ENCODE measurements at regions of chr5 and their contacts with region 1.

Region 1: DNA sequence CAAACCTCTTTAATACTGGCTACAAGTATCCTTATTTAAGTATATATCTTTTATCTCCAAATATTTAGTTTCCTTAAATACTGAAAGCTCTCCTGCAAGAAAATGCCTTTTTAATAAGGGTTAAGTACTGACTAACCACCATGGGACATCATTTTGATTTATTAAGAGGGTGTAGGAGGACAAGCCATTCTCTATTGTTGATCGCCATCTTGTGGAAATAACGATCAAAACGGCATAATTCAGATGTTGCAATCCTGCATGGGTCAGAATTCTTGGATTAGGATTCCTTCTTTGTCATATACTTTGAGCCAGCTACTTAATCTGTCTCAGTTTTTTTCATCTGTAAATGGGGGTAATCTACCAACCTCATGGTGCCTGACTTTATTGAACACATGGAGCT is 28.7 kb upstream of the C5orf46 start:
- DNase-seq: peak in 1 of 2 experiments; percentile 15
- H3K4me3 ChIP-seq: no peak overlapping the region
- H3K27ac ChIP-seq: no peak overlapping the region
- H3K4me1 ChIP-seq: no peaks in the 10 kb centered on the region
- H3K27me3 ChIP-seq: no peaks in the 10 kb centered on the region
- CTCF ChIP-seq: peak in 2 of 3 experiments; percentile 62 to 66; a peak in 3 of 4 replicates
- EP300 ChIP-seq: no peak
- POLR2A ChIP-seq: no peak
- RAD21 ChIP-seq: peak; percentile 91 to 94

Region 2: GRCh38 chr5:147796556-147797308 is 138.3 kb before region 1 on chr5:
- CTCF ChIA-PET with region 1: no interaction called
- POLR2A ChIA-PET with region 1: no interaction called
- DNase-seq: no peak
- H3K4me3 ChIP-seq: no peak overlapping the region
- H3K27ac ChIP-seq: no peak overlapping the region
- H3K4me1 ChIP-seq: no peaks in the 10 kb centered on the region
- H3K27me3 ChIP-seq: no peaks in the 10 kb centered on the region
- CTCF ChIP-seq: no peak
- EP300 ChIP-seq: no peak
- POLR2A ChIP-seq: no peak
- RAD21 ChIP-seq: no peak

Region 3: DNA sequence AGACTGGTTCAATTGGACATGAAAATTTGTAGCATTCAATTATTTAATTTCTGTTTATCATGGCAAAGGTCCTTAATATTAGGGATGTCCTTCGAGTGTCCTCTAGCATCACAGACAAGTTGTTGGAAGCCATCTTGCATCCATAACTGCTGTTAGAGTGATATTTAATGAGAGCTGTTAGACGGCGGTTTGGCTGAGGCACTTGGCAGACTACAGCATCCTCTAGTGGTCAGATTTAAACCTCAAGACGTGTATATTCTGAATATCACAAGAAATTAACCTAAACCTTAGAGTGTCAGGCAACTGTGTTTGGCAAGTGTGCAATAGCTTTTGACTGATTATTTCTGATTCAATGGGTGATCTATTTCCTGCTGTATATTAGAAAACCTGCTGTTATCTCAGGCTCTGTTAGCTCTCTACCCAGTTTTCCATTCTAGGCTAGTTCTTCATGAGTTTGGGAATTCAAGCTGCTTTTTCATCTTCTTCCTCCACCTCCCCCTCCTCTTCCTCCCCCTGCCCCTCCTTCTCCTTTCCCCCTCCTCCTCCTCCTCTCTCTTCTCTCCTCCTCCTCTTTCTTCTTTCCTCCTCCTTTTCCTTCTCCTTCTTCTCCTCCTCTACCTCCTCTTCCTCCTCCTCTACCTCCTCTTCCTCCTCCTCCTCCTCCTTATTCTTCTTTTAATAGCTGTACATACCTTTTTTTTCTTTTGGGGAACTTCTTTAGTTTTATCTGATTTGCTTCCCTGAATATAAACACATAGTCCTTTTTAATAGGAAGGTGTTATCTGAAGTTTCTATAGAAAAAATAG is 112.1 kb before region 1 on chr5:
- CTCF ChIA-PET with region 1: interaction called, 11 read pairs
- POLR2A ChIA-PET with region 1: no interaction called
- DNase-seq: peak in 1 of 2 experiments; percentile 31
- H3K4me3 ChIP-seq: no peak overlapping the region
- H3K27ac ChIP-seq: no peak overlapping the region
- H3K4me1 ChIP-seq: no peaks in the 10 kb centered on the region
- H3K27me3 ChIP-seq: no peaks in the 10 kb centered on the region
- CTCF ChIP-seq: peak in 2 of 3 experiments; percentile 90 to 94; a peak in 3 of 4 replicates
- EP300 ChIP-seq: no peak
- POLR2A ChIP-seq: no peak
- RAD21 ChIP-seq: peak; percentile 99 to 100

Region 4: DNA sequence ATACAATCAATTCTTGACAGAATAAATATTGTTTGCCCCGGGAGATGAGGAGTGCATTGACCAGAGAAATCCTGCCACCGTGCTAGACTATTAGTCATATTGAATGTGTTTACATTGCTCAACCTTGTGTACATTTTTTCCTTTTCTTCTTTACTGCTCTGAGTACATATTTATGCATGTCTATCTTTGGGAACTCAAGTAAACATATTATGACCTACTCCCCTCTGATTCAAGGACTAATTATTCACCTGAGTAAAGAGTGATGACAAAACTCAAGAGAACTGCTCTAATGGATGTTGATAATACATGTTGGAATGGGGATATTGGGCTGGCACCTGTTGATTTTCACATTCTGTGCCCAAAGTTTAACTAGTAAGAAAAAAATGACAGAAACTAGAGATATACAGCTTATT is 99.6 kb before region 1 on chr5:
- CTCF ChIA-PET with region 1: no interaction called
- POLR2A ChIA-PET with region 1: no interaction called
- DNase-seq: no peak
- H3K4me3 ChIP-seq: no peak overlapping the region
- H3K27ac ChIP-seq: no peak overlapping the region
- H3K4me1 ChIP-seq: no peaks in the 10 kb centered on the region
- H3K27me3 ChIP-seq: no peaks in the 10 kb centered on the region
- CTCF ChIP-seq: no peak
- EP300 ChIP-seq: no peak
- POLR2A ChIP-seq: no peak
- RAD21 ChIP-seq: no peak

Region 5: GRCh38 chr5:147857302-147858129 is 77.5 kb before region 1 on chr5:
- CTCF ChIA-PET with region 1: interaction called, 126 read pairs
- POLR2A ChIA-PET with region 1: interaction called, 249 read pairs
- DNase-seq: peak; percentile 50 to 76
- H3K4me3 ChIP-seq: no peak overlapping the region
- H3K27ac ChIP-seq: no peak overlapping the region
- H3K4me1 ChIP-seq: peaks cover 2 to 16% (median 13%) of the 10 kb centered on the region in 4 experiments; a peak in 5 of 7 replicates
- H3K27me3 ChIP-seq: no peaks in the 10 kb centered on the region
- CTCF ChIP-seq: peak in 2 of 3 experiments; percentile 61 to 83; a peak in 3 of 4 replicates
- EP300 ChIP-seq: no peak
- POLR2A ChIP-seq: no peak; a peak in 1 of 3 replicates
- RAD21 ChIP-seq: peak; percentile 85 to 86

Region 6: GRCh38 chr5:147874910-147875367 is 60.1 kb before region 1 on chr5:
- CTCF ChIA-PET with region 1: interaction called, 163 read pairs
- POLR2A ChIA-PET with region 1: interaction called, 13 read pairs
- DNase-seq: no peak
- H3K4me3 ChIP-seq: peak overlapping the region; percentile 7 to 96 (median 46); a peak in 7 of 8 replicates
- H3K27ac ChIP-seq: peak overlapping the region; percentile 79
- H3K4me1 ChIP-seq: peaks cover 11 to 24% (median 18%) of the 10 kb centered on the region in 4 experiments; a peak in 6 of 7 replicates
- H3K27me3 ChIP-seq: no peaks in the 10 kb centered on the region
- CTCF ChIP-seq: no peak
- EP300 ChIP-seq: no peak
- POLR2A ChIP-seq: no peak
- RAD21 ChIP-seq: no peak

Region 7: DNA sequence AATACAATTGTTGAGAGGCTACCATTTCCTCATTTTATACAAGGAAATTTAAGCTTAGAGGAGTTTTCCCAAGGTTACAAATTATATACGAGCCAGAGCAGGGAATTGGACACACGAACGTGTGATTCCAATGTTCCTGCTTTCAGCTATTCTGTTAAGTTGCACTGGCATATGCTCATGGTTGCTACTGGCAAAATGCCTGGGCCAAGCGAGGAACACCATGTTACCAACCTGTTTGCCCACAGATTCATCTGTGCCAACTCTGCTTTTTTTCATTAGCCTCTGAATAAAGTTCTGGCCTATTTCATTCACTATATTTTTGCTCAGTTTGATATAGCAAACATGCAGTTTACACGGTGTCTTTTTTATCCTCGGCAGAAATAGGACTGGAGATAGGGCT is 23.6 kb before region 1 on chr5:
- CTCF ChIA-PET with region 1: interaction called, 13 read pairs
- POLR2A ChIA-PET with region 1: no interaction called
- DNase-seq: no peak
- H3K4me3 ChIP-seq: no peak overlapping the region
- H3K27ac ChIP-seq: no peak overlapping the region
- H3K4me1 ChIP-seq: no peaks in the 10 kb centered on the region
- H3K27me3 ChIP-seq: no peaks in the 10 kb centered on the region
- CTCF ChIP-seq: no peak
- EP300 ChIP-seq: no peak
- POLR2A ChIP-seq: no peak
- RAD21 ChIP-seq: no peak